ENCODE measurements at regions of chr17 and their contacts with region 1.

Region 1: DNA sequence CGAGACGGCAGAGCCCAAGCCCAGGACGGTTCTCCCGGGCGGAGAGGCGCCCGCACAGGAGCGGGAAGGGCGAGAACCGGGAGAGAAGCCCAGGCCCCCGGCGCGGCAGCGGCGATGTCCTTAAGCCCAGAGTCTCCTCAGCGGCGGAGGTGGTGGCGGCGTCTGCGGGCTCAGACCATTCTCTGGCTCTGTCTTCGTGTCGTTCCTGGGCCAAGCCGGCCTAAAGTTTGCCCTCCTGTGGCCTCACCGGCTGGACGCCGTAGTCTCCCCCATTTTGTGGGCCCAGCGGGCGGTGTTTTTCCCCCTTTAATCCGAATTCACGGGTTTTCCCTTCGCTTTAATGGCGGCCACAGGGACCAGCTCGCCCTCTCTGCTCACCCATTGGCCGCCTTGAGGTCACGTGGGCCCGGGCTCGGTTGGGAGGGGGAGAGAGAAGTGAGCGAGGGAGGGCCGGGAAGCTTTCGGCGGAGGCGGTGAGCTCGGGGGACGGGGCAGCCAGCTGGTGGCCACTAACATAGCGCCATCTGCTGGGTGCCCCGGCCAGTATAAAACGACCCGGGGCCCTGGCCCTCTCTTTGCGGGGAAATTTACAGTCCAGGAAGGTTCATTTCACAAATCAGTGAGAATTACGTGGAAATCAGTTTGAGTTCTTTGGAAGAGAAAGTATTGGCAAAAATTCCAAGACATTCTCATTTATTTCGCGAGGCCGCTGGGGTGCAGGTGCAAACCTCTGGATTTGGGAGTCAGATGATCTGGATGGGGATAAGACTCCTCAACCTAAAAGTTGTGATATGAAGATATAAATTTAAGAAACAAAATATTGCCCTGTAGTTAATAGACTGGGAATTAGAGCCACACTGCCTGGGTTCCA is 755 bp upstream of the MED13 start:
- DNase-seq: peak; percentile 97
- ATAC-seq: peak; percentile 94
- H3K4me3 ChIP-seq: peak overlapping the region; percentile 62 to 100 (median 99)
- H3K27ac ChIP-seq: peak overlapping the region; percentile 99
- H3K4me1 ChIP-seq: peaks cover 48% of the 10 kb centered on the region
- H3K27me3 ChIP-seq: no peaks in the 10 kb centered on the region; a peak in 1 of 5 replicates
- CTCF ChIP-seq: peak; percentile 94
- EP300 ChIP-seq: peak in 1 of 2 experiments; percentile 42; a peak in 1 of 4 replicates
- POLR2A ChIP-seq: peak; percentile 85 to 90
- RAD21 ChIP-seq: peak; percentile 86

Region 2: DNA sequence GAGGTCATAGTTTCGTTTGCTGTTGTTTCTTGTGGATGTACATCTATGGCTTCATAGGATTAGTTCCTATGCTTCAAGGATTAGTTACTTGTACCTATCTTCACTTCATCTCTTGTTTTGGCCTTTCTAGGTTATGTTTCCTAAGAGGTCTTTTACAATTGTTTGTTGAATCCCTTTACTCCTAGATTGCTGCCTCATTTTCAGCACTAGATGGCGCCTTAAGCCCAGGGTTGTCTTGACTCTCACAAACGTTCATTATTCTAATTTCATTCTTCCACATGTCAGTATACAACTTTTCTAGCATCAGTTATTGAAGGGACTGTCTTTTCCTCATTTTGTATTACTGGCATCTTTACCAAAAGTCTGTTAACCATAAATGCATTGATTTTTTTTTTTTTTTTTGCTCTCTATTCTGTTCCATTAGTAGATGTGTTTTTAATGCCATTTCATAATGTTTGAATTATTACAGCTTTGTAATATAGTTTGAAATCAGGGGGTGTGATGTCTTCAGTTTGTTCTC is 429.9 kb before region 1 on chr17:
- CTCF ChIA-PET with region 1: no interaction called
- POLR2A ChIA-PET with region 1: no interaction called
- in situ Hi-C with region 1: no loop called
- intact Hi-C with region 1: loop called (anchors 1 kb)
- DNase-seq: peak; percentile 62
- ATAC-seq: peak; percentile 58
- H3K4me3 ChIP-seq: no peak overlapping the region
- H3K27ac ChIP-seq: no peak overlapping the region
- H3K4me1 ChIP-seq: no peaks in the 10 kb centered on the region
- H3K27me3 ChIP-seq: no peaks in the 10 kb centered on the region
- CTCF ChIP-seq: peak; percentile 91
- EP300 ChIP-seq: no peak
- POLR2A ChIP-seq: no peak
- RAD21 ChIP-seq: peak; percentile 83

Region 3: DNA sequence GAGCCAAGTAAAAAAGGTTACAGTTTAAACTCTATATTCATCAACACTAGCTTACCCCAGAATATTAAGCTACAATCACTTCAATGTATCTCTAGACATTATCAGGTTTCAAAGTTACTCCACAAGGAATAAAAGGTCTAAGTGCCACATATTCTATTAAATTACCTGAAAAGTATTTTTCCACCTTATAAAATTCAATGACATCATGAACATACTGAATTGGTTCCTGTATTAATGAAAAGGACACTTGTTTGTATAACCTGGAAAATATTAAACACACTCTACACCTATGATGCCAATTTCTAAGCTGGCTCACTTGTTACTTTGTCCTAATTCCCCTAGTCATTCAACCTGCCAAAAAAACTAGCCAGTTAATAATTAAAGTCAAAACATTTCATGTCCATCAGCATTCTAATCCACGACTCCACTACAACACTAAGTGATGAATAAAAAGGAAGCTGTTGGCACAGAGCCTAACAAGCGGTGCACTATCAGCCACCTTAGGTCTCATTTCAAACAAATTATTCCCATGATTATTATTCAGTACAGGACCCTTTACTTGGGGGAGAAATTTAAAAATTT is 13.0 kb before region 1 on chr17:
- CTCF ChIA-PET with region 1: no interaction called
- POLR2A ChIA-PET with region 1: interaction called, 14 read pairs
- in situ Hi-C with region 1: no loop called
- intact Hi-C with region 1: no loop called
- DNase-seq: no peak
- ATAC-seq: no peak
- H3K4me3 ChIP-seq: no peak overlapping the region
- H3K27ac ChIP-seq: no peak overlapping the region
- H3K4me1 ChIP-seq: peaks cover 56% of the 10 kb centered on the region
- H3K27me3 ChIP-seq: no peaks in the 10 kb centered on the region
- CTCF ChIP-seq: no peak
- EP300 ChIP-seq: no peak
- POLR2A ChIP-seq: no peak
- RAD21 ChIP-seq: no peak

Region 4: GRCh38 chr17:62092784-62093183 is 27.0 kb after region 1 on chr17:
- CTCF ChIA-PET with region 1: no interaction called
- POLR2A ChIA-PET with region 1: interaction called, 35 read pairs
- in situ Hi-C with region 1: no loop called
- intact Hi-C with region 1: no loop called
- DNase-seq: no peak
- ATAC-seq: no peak
- H3K4me3 ChIP-seq: no peak overlapping the region
- H3K27ac ChIP-seq: no peak overlapping the region
- H3K4me1 ChIP-seq: peaks cover 66% of the 10 kb centered on the region
- H3K27me3 ChIP-seq: no peaks in the 10 kb centered on the region
- CTCF ChIP-seq: no peak
- EP300 ChIP-seq: no peak
- POLR2A ChIP-seq: no peak
- RAD21 ChIP-seq: no peak

Region 5: GRCh38 chr17:62109378-62109902 is 43.6 kb after region 1 on chr17:
- CTCF ChIA-PET with region 1: interaction called, 37 read pairs
- POLR2A ChIA-PET with region 1: interaction called, 28 read pairs
- in situ Hi-C with region 1: no loop called
- intact Hi-C with region 1: loop called (anchors 1 kb)
- DNase-seq: peak; percentile 90
- ATAC-seq: peak; percentile 99
- H3K4me3 ChIP-seq: no peak overlapping the region
- H3K27ac ChIP-seq: no peak overlapping the region
- H3K4me1 ChIP-seq: peaks cover 36% of the 10 kb centered on the region
- H3K27me3 ChIP-seq: no peaks in the 10 kb centered on the region; a peak in 2 of 5 replicates
- CTCF ChIP-seq: peak; percentile 100
- EP300 ChIP-seq: peak in 1 of 2 experiments; percentile 33; a peak in 1 of 4 replicates
- POLR2A ChIP-seq: no peak
- RAD21 ChIP-seq: peak; percentile 100

Region 6: GRCh38 chr17:62164763-62165753 is 99.2 kb after region 1 on chr17:
- CTCF ChIA-PET with region 1: no interaction called
- POLR2A ChIA-PET with region 1: no interaction called
- in situ Hi-C with region 1: no loop called
- intact Hi-C with region 1: no loop called
- DNase-seq: peak; percentile 56
- ATAC-seq: peak; percentile 71
- H3K4me3 ChIP-seq: no peak overlapping the region
- H3K27ac ChIP-seq: no peak overlapping the region
- H3K4me1 ChIP-seq: peaks cover 36% of the 10 kb centered on the region
- H3K27me3 ChIP-seq: 0 out of 5 replicates have a peak, but pooled peaks cover 0 to 3% of the 10 kb centered on the region in 2 experiments
- CTCF ChIP-seq: no peak
- EP300 ChIP-seq: peak in 1 of 2 experiments; percentile 29; a peak in 1 of 4 replicates
- POLR2A ChIP-seq: no peak
- RAD21 ChIP-seq: no peak

Measured in HepG2 (cell line).